ENCODE measurements at regions of chr20 and their contacts with region 1.

Region 1: GRCh38 chr20:62611819-62612218 is 30.5 kb upstream of the SLCO4A1 start:
- DNase-seq: no peak
- H3K4me3 ChIP-seq: no peak overlapping the region
- H3K27ac ChIP-seq: no peak overlapping the region
- H3K4me1 ChIP-seq: no peaks in the 10 kb centered on the region
- H3K27me3 ChIP-seq: no peaks in the 10 kb centered on the region
- CTCF ChIP-seq: no peak
- POLR2A ChIP-seq: no peak

Region 2: DNA sequence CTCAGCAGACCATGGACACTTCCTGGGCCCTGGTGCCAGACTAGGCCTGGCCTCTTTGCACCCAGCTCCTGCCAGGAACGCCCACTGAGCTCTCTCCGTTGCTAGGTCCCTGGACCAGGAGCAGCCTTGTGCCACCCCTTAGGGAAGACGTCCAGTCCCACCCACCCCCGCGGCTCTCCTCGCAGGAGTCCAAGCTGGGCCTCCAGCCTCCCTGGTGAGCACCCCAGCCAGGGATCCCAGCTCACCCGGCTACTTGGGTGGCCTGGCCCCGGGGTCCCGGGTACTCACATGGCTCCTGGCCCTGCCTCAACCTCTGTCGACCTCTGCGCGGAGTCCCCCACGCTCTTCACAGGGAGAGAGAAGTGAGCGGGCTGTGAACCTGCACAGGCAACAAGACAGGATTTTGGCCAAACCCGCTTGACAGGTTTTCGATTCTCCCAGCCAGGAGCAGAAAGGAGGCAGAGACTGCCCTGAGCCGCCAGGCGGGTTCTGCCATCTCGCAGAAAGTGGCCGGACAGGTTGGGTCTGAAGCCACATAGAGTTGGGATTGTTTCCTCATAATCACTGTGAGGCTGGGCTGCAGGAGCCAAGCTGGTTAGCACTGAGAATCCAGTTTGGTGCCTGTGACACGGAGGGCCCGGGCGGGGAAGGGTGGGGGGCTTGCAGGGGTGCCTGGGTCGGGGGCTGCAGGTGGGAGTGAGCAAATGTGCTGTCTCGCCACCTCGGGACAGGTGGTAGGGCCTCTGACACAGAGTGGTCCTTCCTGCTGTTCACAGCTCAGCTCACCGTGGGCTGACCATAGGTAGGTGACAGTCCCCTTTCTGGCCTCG is 184.4 kb before region 1 on chr20 and contains the start of gene RBBP8NL:
- intact Hi-C with region 1: loop called in 1 of 2 experiments (anchors 5 kb)
- DNase-seq: no peak
- H3K4me3 ChIP-seq: no peak within 1 kb of the TSS
- H3K27ac ChIP-seq: no peak within 1 kb of the TSS
- H3K4me1 ChIP-seq: no peaks in the 10 kb centered on the region
- H3K27me3 ChIP-seq: no peaks in the 10 kb centered on the region
- CTCF ChIP-seq: no peak
- POLR2A ChIP-seq: no peak
- total RNA-seq, gene RBBP8NL: not detected

Region 3: GRCh38 chr20:62539198-62540045 is 72.4 kb before region 1 on chr20:
- intact Hi-C with region 1: no loop called
- DNase-seq: no peak
- H3K4me3 ChIP-seq: no peak overlapping the region
- H3K27ac ChIP-seq: no peak overlapping the region
- H3K4me1 ChIP-seq: no peaks in the 10 kb centered on the region
- H3K27me3 ChIP-seq: peaks cover 4% of the 10 kb centered on the region
- CTCF ChIP-seq: no peak
- POLR2A ChIP-seq: no peak

Measured in adrenal gland (tissue), 19 donors.